ENCODE measurements at regions of chr17 and their contacts with region 1.

Region 1: DNA sequence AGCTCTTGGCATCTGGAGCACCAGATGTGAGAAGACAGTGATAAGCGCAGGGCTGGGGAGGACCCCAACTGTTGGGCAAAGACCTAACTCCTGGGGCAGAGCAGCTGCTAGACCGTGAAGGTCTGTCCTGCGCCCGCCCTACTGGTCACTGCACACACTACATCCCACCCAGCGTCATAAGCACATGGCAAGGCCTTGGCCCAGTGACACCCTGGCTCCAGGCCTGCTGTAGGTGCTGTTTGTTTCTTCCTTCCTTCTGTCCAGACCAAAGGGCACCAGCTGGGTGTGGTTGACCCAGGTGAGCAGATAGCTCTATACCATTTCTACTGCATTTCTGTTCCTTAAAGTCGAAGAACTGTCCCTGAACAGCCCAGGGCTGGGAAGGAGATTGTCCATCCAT is 6.4 kb downstream of the TRPV3 start:
- DNase-seq: no peak
- H3K4me3 ChIP-seq: no peak overlapping the region
- H3K27ac ChIP-seq: no peak overlapping the region
- H3K4me1 ChIP-seq: no peaks in the 10 kb centered on the region
- H3K27me3 ChIP-seq: no peaks in the 10 kb centered on the region
- CTCF ChIP-seq: no peak

Region 2: DNA sequence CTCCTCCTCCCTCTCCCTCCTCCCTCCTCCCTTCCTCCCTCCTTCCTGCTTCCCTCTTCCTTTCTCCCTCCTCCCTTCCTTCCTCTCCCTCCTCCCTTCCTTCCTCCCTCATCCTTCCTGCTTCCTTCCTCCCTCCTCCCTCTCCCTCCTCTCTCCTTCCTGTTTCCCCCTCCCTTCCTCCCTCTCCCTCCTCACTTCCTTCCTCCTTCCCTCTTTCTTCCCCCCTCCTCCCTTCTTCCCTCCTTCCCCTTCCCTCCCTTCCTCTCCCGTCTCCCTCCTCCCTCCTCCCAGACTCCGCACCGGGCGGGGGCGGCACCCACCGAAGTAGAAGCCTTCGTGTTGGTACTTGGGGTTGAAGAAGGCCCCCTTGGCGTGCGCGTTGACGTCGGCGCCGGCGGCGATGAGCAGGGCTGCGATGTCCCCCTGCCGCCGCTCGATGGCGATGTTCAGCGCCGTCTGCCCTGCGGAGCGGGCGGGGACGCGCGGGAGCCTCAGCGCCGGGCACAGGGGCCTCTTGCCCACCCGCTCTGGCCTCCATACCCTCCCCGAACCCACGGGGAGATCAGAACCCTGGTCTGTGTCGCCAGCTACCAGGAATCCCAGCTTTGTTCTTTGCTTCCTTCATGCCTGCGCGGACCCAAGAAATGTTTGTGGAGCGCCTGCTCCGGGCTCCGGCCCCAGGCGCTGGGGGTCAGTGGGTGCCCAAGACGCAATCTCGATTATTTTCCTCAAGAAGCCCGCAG is 15.8 kb before region 1 on chr17:
- CTCF ChIA-PET with region 1: interaction called, 11 read pairs
- POLR2A ChIA-PET with region 1: no interaction called
- intact Hi-C with region 1: no loop called
- DNase-seq: no peak
- H3K4me3 ChIP-seq: no peak overlapping the region
- H3K27ac ChIP-seq: no peak overlapping the region
- H3K4me1 ChIP-seq: no peaks in the 10 kb centered on the region
- H3K27me3 ChIP-seq: no peaks in the 10 kb centered on the region
- CTCF ChIP-seq: no peak